BJ (cell line): ENCODE measurements at regions of chr22 and their contacts with region 1.

Region 1: DNA sequence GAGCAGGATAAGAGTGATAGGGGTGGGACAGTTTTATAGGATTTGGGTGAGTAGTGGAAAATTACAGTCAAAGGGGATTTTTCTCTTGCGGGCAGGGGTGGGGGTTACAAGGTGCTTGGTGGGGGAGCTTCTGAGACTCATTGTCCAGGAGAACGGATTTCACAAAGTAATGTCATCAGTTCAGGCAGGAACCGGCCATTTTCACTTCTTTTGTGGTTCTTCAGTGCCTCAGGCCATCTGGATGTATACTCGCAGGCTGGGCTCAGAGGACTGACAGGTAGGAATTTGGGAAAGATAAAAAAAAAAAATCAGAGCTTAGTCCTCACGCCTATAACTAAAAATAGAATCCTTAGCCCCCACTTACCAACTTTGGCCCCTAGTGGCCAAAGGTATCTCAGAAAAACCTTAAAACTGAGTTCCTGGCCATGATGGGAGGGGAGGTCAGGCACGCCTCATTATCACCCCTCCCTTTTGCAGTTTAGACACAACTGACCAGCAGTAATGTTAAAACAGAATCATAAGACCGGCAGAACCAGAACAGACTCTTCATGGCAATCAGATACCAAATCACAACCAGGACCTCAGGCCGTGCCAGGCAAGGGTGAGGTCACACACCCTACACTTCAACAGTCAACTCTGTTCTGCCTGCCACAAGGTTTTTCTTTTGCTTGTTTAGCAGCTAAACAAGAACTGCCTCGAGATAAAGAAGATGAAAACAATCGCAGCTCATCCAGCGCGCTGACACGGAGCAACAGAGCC is 8.9 kb upstream of the APOBEC3G start:
- DNase-seq: no peak
- H3K4me3 ChIP-seq: no peak overlapping the region
- H3K27me3 ChIP-seq: peaks cover 3% of the 10 kb centered on the region
- CTCF ChIP-seq: no peak

Region 2: DNA sequence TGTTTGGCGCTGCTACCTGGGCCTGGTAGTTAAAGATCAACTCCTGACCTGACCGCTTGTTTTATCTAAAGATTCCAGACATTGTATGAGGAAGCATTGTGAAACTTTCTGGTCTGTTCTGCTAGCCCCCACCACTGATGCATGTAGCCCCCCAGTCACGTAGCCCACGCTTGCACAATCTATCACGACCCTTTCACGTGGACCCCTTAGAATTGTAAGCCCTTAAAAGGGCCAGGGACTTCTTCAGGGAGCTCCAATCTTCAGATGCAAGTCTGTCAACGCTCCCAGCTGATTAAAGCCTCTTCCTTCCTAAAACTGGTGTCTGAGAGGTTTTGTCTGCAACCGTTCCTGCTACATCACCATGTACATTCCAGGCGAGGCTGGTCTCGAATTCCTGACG is 12.6 kb before region 1 on chr22:
- CTCF ChIA-PET with region 1: no interaction called
- POLR2A ChIA-PET with region 1: interaction called, 17 read pairs
- DNase-seq: no peak
- H3K4me3 ChIP-seq: no peak overlapping the region
- H3K27me3 ChIP-seq: peaks cover 6% of the 10 kb centered on the region
- CTCF ChIP-seq: no peak